Sciatic nerve (tissue), 2 donors: ENCODE measurements at regions of chr1 and their contacts with region 1.

Region 1: GRCh38 chr1:118144684-118145083 is 40.3 kb downstream of the SPAG17 start:
- DNase-seq: no peak
- ATAC-seq: peak; percentile 73

Region 2: DNA sequence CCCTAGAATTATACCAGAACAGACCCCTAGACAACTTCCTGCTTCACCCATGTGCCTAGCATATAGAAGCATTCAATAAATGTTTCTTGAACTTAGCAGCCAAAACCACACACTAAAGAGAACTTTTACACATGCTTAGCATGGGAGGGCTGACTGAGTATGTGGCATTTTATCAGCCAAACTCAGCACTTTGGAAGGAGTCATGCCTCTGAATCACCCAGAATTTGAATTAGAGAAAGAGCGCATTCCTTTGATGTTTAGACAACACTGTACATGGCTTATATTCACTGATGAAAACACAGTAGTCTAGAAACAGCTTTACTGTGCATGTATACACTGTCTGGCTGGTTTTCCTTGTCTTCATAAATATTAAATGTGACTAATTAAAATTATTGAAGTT is 14.2 kb after region 1 on chr1:
- intact Hi-C with region 1: no loop called
- DNase-seq: no peak
- ATAC-seq: peak; percentile 48

Region 3: DNA sequence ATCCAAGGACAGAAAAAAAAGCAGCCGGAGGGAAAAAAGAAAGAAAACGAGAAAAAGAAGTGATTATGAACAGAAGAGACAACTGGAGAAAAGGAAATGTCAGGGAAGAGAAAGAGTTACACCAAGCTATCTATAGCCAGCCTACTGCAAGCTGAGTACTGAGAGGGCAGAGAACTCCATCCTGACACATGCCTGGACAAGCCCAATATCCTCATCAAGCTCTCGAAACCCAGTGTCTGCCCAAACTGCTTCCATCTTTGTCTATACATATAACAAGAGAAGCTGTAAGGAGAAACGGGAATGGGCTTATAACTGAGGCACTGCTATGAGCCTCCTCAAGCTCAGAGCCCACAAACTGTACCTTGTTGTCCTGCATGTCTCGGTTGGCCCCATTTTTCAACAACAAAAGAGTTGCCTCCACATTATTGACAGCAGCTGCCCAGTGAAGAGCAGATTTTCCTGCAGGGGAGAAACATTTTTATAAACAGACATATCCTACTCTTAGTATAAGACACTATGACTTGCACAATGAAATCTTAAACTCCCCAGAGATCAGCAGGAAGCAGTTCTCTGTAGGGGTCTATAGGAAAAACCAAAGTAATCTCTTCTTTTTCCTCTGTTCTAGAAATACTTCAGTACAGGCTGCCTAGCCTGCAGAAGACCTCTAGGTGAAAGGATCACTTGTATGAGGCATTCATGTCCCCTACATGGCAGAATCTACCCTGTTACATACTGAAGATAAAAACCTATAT is 1772.8 kb after region 1 on chr1:
- intact Hi-C with region 1: loop called (anchors 5 kb)
- DNase-seq: no peak
- ATAC-seq: no peak